Pancreas (tissue), 10 donors: ENCODE measurements at regions of chr7 and their contacts with region 1.

Region 1: DNA sequence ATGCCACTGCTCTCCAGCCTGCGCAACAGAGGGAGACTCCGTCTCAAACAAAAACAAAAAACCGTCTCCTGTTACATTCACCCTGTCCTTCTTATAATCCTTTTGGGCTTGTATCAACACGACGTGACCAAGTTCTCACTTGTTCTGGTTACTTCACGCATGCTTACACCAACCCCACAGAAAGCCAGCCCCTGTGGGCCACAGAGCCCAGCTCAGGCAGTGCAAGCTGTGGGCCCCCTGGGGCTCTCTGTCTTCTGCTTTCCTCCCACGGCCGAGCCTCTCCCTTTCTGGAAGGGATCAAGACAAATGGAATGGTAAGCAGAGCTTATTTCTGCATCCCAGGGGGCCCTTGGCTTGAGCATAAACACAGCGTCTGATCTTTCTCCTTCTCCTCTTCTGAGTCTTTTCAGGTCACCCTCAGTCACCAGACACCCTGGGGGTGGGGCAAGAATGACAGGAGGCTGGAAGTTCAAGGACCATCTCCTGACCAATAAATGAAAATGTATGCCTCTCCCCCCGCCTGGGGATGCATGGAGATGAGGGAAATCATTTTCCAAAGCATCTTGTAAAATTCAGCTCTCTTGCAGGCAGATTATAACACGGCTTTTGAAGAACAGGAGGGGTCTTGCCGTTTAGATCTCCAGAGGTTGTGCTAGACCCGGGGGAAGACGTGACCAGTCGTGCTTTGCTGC is 19.0 kb upstream of the TRIM56 start:
- DNase-seq: no peak
- ATAC-seq: no peak
- H3K4me3 ChIP-seq: no peak overlapping the region
- H3K27ac ChIP-seq: no peak overlapping the region
- H3K4me1 ChIP-seq: no peaks in the 10 kb centered on the region
- H3K27me3 ChIP-seq: no peaks in the 10 kb centered on the region
- CTCF ChIP-seq: no peak

Region 2: GRCh38 chr7:100889761-100890634 is 176.3 kb before region 1 on chr7:
- intact Hi-C with region 1: loop called in 2 of 3 experiments (anchors 5 to 10 kb)
- DNase-seq: peak; percentile 91 to 99 (median 95)
- ATAC-seq: peak; percentile 88 to 94 (median 90)
- H3K4me3 ChIP-seq: peak overlapping the region; percentile 23 to 73 (median 55)
- H3K27ac ChIP-seq: peak overlapping the region; percentile 75 to 94 (median 84)
- H3K4me1 ChIP-seq: peaks cover 1 to 11% (median 10%) of the 10 kb centered on the region in 3 donors
- H3K27me3 ChIP-seq: no peaks in the 10 kb centered on the region
- CTCF ChIP-seq: no peak

Region 3: DNA sequence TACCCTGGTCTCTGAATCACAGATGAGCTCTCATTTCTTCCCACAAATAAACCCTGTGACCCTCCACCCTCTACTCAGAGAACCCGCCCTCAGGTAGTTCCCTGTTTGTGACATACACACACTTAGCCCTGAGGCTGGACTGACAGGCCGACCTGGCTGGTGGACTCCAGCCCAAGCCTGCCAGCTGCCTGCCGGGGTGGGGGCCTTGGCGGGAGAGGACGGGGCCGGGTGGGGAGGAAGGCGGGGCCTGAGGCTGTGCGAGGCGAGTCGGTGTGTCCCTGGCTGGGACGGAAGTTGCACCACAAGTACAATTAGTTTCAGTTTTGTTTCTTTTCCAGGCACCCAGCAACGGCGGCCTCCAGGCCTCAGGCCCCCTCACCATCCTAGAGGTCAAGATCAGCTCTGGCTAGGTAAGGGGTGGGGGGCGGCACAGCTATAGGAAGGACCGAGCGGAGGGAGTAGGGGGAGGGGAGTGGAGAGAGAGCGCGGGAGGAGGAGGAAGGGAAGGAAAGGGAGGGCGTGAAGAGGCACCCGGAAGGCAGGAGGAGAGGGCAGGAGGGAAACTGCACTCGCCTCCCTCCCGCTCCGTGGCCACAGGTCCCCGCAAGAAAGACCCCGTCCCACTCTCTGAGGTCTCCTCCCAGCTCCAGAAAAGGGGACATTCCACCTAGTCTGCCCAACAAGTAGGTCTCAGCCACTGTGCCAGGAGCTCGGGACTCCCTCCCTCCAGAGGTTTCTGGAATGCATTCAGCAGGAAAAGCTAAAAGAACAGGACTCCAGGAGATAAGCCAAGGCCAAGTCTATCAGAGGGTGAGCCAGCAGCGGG is 19.1 kb after region 1 on chr7 and contains the start of gene TRIM56:
- intact Hi-C with region 1: loop called in 1 of 3 experiments (anchors 1 kb)
- DNase-seq: peak; percentile 91 to 97 (median 94)
- ATAC-seq: peak; percentile 96 to 98 (median 96)
- H3K4me3 ChIP-seq: peak within 1 kb of the TSS; percentile 48 to 70 (median 60)
- H3K27ac ChIP-seq: peak within 1 kb of the TSS; percentile 83 to 93 (median 88)
- H3K4me1 ChIP-seq: peaks cover 0 to 5% (median 3%) of the 10 kb centered on the region in 3 donors
- H3K27me3 ChIP-seq: no peaks in the 10 kb centered on the region
- CTCF ChIP-seq: no peak
- total RNA-seq, gene TRIM56: 13.2 to 26.5 (median 15.9) TPM

Region 4: DNA sequence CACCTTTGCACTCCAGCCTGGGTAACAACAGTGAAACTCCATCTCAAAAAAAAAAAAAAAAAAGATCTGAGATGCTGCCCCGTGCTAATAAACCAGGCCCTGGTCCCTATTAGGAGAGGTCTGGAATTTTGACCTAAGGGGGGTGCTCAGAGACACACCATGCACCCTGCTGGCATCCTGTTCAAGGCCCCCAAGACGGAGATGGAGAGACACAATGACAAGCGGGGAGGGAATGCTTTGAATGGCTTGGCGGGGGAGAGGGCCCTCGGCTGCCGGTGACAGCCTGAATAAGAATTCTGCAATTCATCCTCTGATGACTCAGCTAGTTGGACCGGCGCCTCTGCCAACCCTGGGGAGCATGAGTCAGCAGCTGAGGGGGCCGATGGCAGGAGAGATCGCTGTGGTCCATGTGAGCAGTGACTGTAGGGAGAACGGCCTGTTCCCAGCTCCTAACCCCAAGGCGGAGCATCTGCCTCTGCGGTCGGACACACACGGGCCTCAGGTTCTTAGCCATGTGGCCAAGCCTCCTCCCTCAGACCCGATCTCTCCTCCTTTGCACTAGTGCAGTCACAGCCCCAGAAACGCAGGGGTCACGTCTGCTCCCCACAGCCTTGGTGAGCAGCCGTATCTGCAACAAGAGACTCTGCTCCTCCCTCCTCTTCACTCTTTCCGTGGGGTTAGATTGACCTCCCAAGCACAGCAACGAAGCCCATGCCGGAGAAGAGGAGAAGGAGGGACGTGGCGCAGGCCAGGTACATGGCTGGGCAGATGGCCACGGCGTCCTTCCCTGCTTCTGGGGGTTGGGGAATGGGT is 33.9 kb after region 1 on chr7:
- intact Hi-C with region 1: no loop called
- DNase-seq: peak; percentile 77 to 90 (median 85)
- ATAC-seq: peak; percentile 87 to 96 (median 94)
- H3K4me3 ChIP-seq: no peak overlapping the region
- H3K27ac ChIP-seq: no peak overlapping the region
- H3K4me1 ChIP-seq: peaks cover 0 to 3% (median 0%) of the 10 kb centered on the region in 3 donors
- H3K27me3 ChIP-seq: no peaks in the 10 kb centered on the region
- CTCF ChIP-seq: no peak

Region 5: DNA sequence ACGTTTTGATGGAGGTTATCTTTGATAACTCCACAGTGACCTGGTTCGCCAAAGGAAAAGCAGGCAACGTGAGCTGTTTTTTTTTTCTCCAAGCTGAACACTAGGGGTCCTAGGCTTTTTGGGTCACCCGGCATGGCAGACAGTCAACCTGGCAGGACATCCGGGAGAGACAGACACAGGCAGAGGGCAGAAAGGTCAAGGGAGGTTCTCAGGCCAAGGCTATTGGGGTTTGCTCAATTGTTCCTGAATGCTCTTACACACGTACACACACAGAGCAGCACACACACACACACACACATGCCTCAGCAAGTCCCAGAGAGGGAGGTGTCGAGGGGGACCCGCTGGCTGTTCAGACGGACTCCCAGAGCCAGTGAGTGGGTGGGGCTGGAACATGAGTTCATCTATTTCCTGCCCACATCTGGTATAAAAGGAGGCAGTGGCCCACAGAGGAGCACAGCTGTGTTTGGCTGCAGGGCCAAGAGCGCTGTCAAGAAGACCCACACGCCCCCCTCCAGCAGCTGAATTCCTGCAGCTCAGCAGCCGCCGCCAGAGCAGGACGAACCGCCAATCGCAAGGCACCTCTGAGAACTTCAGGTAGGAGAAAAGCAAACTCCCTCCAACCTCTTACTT is 60.5 kb after region 1 on chr7 and contains the start of gene SERPINE1:
- intact Hi-C with region 1: no loop called
- DNase-seq: peak in 4 of 6 donors; percentile 33 to 70 (median 48)
- ATAC-seq: peak; percentile 56 to 83 (median 70)
- H3K4me3 ChIP-seq: peak within 1 kb of the TSS in 1 of 4 donors; percentile 18
- H3K27ac ChIP-seq: peak within 1 kb of the TSS in 2 of 4 donors; percentile 10 to 18
- H3K4me1 ChIP-seq: no peaks in the 10 kb centered on the region
- H3K27me3 ChIP-seq: no peaks in the 10 kb centered on the region
- CTCF ChIP-seq: no peak
- total RNA-seq, gene SERPINE1: 0.98 to 14.5 (median 3.7) TPM